Heart right ventricle (tissue), 16 donors: ENCODE measurements at regions of chr1 and their contacts with region 1.

Region 1: GRCh38 chr1:196309386-196309785 is 298.9 kb downstream of the KCNT2 start:
- DNase-seq: no peak
- ATAC-seq: no peak
- H3K4me3 ChIP-seq: no peak overlapping the region
- H3K27ac ChIP-seq: no peak overlapping the region
- H3K4me1 ChIP-seq: no peaks in the 10 kb centered on the region
- H3K27me3 ChIP-seq: no peaks in the 10 kb centered on the region
- CTCF ChIP-seq: peak in 7 of 9 donors; percentile 16 to 50 (median 33)

Region 2: GRCh38 chr1:195939844-195940243 is 369.5 kb before region 1 on chr1:
- intact Hi-C with region 1: loop called in 3 of 10 experiments (anchors 5 kb)
- DNase-seq: no peak
- ATAC-seq: peak in 1 of 8 donors; percentile 50
- H3K4me3 ChIP-seq: no peak overlapping the region
- H3K27ac ChIP-seq: no peak overlapping the region
- H3K4me1 ChIP-seq: no peaks in the 10 kb centered on the region
- H3K27me3 ChIP-seq: no peaks in the 10 kb centered on the region
- CTCF ChIP-seq: peak in 6 of 9 donors; percentile 24 to 39 (median 34)

Region 3: DNA sequence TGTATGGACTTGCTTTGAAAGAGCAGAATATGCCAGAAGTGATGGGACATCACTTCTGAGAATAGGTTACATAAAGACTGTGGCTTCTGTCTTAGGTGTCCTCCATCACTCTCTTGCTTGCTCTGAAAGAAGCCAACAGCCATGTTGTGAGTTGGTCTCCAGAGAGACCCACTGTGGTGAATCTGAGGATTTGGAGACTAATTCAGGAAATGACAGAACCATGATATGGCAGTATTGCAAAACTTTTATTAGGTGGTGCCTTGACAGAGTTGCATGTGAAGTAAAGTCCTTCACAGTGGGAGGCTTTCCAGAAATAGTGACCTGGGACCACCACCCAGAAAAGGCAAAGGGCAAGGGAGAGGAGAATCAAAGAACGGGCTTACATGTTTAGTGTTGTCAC is 329.7 kb before region 1 on chr1:
- intact Hi-C with region 1: no loop called
- DNase-seq: no peak
- ATAC-seq: no peak
- H3K4me3 ChIP-seq: no peak overlapping the region
- H3K27ac ChIP-seq: no peak overlapping the region
- H3K4me1 ChIP-seq: no peaks in the 10 kb centered on the region
- H3K27me3 ChIP-seq: no peaks in the 10 kb centered on the region
- CTCF ChIP-seq: no peak